Dorsolateral prefrontal cortex (tissue), 120 donors: ENCODE measurements at regions of chr1 and their contacts with region 1.

Region 1: GRCh38 chr1:165162671-165163241 is 193.8 kb downstream of the LMX1A start:
- DNase-seq: no peak
- H3K4me3 ChIP-seq: no peak overlapping the region
- H3K27ac ChIP-seq: no peak overlapping the region
- H3K27me3 ChIP-seq: peaks cover 0 to 16% (median 0%) of the 10 kb centered on the region in 45 donors
- CTCF ChIP-seq: no peak

Region 2: GRCh38 chr1:165144757-165145397 is 17.9 kb before region 1 on chr1:
- intact Hi-C with region 1: loop called in 1 of 2 experiments (anchors 1 kb)
- DNase-seq: peak in 8 of 10 donors; percentile 34 to 63 (median 54)
- H3K4me3 ChIP-seq: no peak overlapping the region
- H3K27ac ChIP-seq: no peak overlapping the region
- H3K27me3 ChIP-seq: peaks cover 0 to 39% (median 8%) of the 10 kb centered on the region in 45 donors
- CTCF ChIP-seq: peak; percentile 50 to 89 (median 81)

Region 3: DNA sequence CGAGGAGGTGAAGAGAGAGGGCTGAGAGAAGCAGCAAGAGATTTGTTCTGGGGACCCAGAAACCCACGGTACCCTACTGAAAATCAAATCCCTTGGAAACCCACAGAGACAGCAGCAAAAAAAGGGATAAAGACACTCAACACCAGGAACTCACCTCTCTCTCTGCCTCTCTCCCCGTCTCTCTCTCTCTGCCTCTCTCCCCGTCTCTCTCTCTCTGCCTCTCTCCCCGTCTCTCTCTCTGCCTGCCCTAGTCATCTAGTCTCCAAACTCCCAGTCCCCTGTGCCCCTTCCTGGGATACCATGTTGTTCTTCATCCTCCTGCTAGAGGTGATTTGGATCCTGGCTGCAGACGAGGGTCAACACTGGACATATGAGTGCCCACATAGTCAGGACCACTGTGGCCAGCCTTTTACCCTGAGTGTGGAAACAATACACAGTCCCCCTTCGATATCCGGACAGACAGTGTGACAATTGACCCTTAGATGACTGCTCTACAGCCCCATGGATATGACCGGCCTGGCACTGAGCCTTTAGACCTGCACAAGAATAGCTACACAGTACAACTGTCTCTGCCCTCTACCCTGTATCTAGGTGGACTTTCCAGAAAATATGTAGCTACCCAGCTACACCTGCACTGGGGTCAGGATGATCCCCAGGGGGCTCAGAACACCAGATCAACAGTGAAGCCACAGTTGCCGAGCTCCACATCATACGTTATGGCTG is 545.4 kb after region 1 on chr1:
- intact Hi-C with region 1: no loop called
- DNase-seq: no peak
- H3K4me3 ChIP-seq: no peak overlapping the region
- H3K27ac ChIP-seq: no peak overlapping the region
- H3K27me3 ChIP-seq: no peaks in the 10 kb centered on the region
- CTCF ChIP-seq: no peak